ENCODE measurements at regions of chr2 and their contacts with region 1.

Region 1: GRCh38 chr2:177164584-177165052 is 48.0 kb upstream of the HNRNPA3 start:
- DNase-seq: peak; percentile 86
- ATAC-seq: peak; percentile 79
- H3K4me3 Mint-ChIP-seq: no peak overlapping the region
- H3K27ac Mint-ChIP-seq: no peak overlapping the region
- H3K4me1 Mint-ChIP-seq: peaks cover 29% of the 10 kb centered on the region
- H3K27me3 Mint-ChIP-seq: peaks cover 10% of the 10 kb centered on the region

Region 2: GRCh38 chr2:177148477-177149154 is 16.0 kb before region 1 on chr2:
- CTCF ChIA-PET with region 1: interaction called, 97 read pairs
- POLR2A ChIA-PET with region 1: no interaction called
- DNase-seq: peak; percentile 83
- ATAC-seq: peak; percentile 96
- H3K4me3 Mint-ChIP-seq: peak overlapping the region; percentile 76
- H3K27ac Mint-ChIP-seq: peak overlapping the region; percentile 53
- H3K4me1 Mint-ChIP-seq: peaks cover 13% of the 10 kb centered on the region
- H3K27me3 Mint-ChIP-seq: peaks cover 42% of the 10 kb centered on the region

Region 3: DNA sequence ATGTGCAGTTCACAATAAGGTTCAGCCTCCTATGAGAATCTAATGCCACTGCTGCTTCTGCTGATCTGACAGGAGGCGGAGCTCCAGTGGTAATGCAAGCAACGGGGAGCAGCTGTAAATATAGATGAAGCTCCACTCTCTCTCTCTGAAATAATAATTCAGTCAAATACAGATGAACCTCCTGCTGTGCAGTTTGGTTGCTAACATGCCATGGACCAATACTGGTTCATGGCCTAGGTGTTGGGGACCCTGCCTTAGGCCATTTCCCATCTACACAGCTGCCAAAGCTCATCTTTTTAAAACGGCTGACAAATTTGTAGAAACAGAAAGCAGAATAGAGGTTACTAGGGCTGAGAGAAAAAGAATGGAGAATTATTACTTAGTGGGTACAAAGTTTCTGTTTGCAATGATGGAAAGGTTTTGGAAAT is 37.3 kb after region 1 on chr2:
- CTCF ChIA-PET with region 1: interaction called, 27 read pairs
- POLR2A ChIA-PET with region 1: interaction called, 3 read pairs
- DNase-seq: no peak
- ATAC-seq: no peak
- H3K4me3 Mint-ChIP-seq: no peak overlapping the region
- H3K27ac Mint-ChIP-seq: no peak overlapping the region
- H3K4me1 Mint-ChIP-seq: peaks cover 2% of the 10 kb centered on the region
- H3K27me3 Mint-ChIP-seq: no peaks in the 10 kb centered on the region

Region 4: DNA sequence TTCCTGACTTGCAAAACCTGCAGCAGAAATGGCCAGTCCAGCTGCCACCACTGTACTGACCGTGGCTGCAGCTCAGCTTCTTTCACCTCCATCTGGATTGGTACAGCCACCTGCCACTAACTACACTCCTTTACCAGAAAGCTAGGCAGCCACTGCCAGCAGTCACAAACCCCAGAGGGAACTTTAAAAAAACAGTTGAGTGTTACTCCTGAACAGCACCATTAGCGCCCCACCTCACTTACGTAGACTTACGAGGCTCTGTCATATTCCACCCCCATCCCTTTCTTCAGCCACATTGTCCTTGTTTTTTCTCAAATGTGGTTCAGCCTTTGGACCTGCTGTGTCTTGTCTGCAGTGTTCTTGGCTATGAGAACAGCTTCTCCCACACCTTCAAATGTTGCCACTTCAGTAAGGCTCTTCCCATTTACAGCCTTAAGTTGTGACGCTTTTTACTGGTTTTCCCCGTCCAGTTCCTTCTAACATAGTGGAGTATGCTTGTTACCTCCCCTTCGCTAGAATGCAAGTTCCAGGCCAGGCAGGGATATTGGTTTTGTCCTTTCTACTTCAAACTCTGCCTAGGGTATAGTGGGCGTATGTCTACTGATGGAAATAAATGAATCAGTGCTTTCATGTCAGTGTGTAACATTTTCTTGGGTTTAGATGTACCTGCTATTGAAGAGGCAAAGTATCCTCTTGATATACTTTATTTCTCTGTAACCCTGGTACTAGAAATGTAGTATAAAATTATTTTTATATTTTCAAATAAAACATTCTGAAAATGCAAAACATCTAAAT is 65.0 kb after region 1 on chr2:
- CTCF ChIA-PET with region 1: interaction called, 13 read pairs
- POLR2A ChIA-PET with region 1: interaction called, 3 read pairs
- DNase-seq: no peak
- ATAC-seq: peak; percentile 12
- H3K4me3 Mint-ChIP-seq: no peak overlapping the region
- H3K27ac Mint-ChIP-seq: peak overlapping the region; percentile 13
- H3K4me1 Mint-ChIP-seq: peaks cover 4% of the 10 kb centered on the region
- H3K27me3 Mint-ChIP-seq: no peaks in the 10 kb centered on the region

Region 5: GRCh38 chr2:177281400-177282180 is 117.0 kb after region 1 on chr2:
- CTCF ChIA-PET with region 1: interaction called, 14 read pairs
- POLR2A ChIA-PET with region 1: interaction called, 4 read pairs
- DNase-seq: peak; percentile 43
- ATAC-seq: peak; percentile 55
- H3K4me3 Mint-ChIP-seq: no peak overlapping the region
- H3K27ac Mint-ChIP-seq: peak overlapping the region; percentile 19
- H3K4me1 Mint-ChIP-seq: peaks cover 50% of the 10 kb centered on the region
- H3K27me3 Mint-ChIP-seq: no peaks in the 10 kb centered on the region

Region 6: DNA sequence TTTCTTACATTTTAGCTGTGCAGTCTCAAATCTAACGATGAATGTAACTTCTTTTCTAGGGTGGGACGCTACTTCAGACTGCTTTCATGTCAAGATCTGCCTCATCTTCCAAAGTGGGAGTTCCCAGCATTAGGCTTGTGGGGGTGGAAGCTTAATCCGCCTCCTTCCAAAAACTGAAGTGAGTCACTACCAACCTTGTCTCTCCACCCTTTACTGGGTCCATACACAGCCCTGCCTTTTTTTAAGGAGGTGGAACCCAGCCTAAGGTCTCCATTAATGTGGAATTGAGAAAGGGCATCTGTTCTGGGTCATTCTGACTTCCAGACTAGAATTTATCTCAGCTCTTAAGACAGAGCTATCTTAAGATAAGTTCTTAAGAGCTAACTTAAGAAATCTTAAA is 141.9 kb after region 1 on chr2:
- CTCF ChIA-PET with region 1: interaction called, 27 read pairs
- POLR2A ChIA-PET with region 1: no interaction called
- DNase-seq: no peak
- ATAC-seq: no peak
- H3K4me3 Mint-ChIP-seq: no peak overlapping the region
- H3K27ac Mint-ChIP-seq: no peak overlapping the region
- H3K4me1 Mint-ChIP-seq: peaks cover 33% of the 10 kb centered on the region
- H3K27me3 Mint-ChIP-seq: no peaks in the 10 kb centered on the region

Region 7: DNA sequence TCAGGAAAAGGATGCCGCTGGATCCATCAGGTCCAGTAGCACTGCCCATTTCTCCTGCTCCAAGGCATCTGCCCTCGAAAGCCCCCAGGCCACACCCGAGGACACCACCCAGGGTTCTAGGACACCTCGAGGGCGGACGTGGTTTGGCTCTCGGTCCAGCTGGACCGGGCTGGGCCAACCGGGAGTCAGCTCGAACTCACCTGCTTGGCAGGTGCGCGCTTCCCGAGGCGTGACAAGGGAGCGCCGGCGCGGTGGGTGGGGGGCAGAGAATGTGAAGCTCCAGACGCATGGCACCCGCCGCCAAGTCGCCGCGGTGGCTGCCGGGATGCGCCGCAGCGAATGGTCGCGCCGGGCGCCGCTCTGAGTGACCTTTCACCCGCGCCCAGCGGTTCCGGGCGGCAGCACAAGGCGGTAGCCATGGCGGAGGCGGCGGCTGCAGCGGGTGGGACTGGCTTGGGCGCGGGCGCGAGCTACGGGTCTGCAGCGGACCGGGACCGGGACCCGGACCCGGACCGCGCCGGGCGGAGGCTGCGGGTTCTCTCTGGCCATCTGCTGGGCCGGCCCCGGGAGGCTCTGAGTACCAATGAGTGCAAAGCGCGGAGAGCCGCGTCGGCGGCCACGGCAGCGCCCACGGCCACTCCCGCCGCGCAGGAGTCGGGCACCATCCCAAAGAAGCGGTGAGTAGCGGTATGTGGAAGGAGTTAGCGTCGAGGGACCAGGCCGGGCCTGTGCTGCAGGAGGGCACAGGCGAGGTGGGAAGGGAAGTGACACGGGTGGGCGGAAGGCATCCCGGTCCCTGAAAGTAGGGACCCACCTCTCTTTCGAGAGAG is 228.0 kb after region 1 on chr2 and contains the start of gene AGPS:
- CTCF ChIA-PET with region 1: interaction called, 37 read pairs
- POLR2A ChIA-PET with region 1: interaction called, 4 read pairs
- DNase-seq: peak; percentile 86
- ATAC-seq: peak; percentile 96
- H3K4me3 Mint-ChIP-seq: peak within 1 kb of the TSS; percentile 88
- H3K27ac Mint-ChIP-seq: peak within 1 kb of the TSS; percentile 93
- H3K4me1 Mint-ChIP-seq: peaks cover 52% of the 10 kb centered on the region
- H3K27me3 Mint-ChIP-seq: no peaks in the 10 kb centered on the region
- total RNA-seq, gene AGPS: 65.9 to 67.9 TPM

Measured in activated CD8-positive, alpha-beta T cell treated with anti-CD3 and anti-CD28 coated beads, Interleukin-2, amount 10 ng/mL, durations not matched to agents 7 days and 5 days (primary cell).